Posterior cingulate gyrus (tissue), 11 donors: ENCODE measurements at regions of chr5 and their contacts with region 1.

Region 1: DNA sequence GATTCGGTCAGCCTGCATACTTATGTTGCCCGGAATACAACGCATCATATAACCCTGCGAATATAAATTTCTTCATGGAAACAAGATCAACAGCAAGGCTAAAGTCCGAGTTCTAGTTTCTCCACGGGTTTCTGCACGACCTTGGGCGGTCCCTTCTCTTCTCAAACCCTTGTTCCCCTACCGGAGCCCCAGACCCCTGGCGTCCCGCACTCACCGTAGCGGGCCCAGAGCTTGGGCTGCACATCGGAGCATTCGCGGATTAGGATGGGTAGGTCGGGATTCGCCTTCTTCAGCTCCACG is 438 bp downstream of the NDUFA2 start:
- DNase-seq: no peak

Region 2: GRCh38 chr5:139882961-139883539 is 763.9 kb before region 1 on chr5:
- intact Hi-C with region 1: no loop called
- DNase-seq: peak in 2 of 10 donors; percentile 68 to 72

Region 3: GRCh38 chr5:140401362-140402257 is 245.4 kb before region 1 on chr5 and contains the start of gene ANKHD1:
- intact Hi-C with region 1: loop called (anchors 5 kb)
- DNase-seq: peak; percentile 98 to 100 (median 98)

Region 4: DNA sequence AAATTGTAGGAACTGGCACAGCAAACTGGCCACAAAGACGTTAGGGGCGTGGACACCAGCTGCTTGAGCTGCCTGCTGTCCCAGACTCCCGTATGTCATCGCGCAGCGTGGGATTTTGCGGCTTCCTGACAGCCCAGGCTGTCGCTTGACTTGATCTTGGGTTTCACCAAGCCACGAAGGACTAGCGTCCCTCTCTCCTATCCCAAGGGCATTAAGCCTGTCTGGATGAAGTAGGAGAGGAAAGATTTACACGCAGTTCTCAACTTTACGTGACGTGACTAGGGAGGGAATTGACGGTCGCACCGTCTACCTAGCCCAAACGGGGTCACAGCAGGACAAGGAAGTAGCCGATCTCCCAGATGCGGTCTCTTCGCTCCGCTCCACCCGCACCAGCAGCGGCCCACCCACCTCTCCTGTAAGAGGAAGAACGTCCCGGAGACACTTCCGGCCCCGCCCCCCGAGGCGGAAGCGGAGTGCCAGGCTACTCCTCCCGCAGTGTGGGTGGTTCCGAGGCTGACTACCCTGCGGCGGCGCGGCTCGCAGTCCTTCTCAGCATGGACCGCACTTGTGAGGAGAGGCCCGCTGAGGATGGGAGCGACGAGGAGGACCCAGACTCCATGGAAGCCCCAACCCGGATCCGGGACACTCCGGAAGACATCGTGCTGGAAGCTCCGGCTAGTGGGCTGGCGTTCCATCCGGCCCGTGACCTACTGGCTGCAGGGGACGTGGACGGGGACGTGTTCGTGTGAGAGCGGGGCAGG is 17.5 kb after region 1 on chr5 and contains the start of gene WDR55:
- intact Hi-C with region 1: loop called (anchors 2 kb)
- DNase-seq: peak; percentile 92 to 100 (median 97)

Region 5: GRCh38 chr5:140690941-140691924 is 44.2 kb after region 1 on chr5 and contains the starts of genes HARS1 and HARS2:
- intact Hi-C with region 1: loop called (anchors 2 kb)
- DNase-seq: peak; percentile 88 to 99 (median 92)